ENCODE measurements at regions of chr14 and their contacts with region 1.

Region 1: GRCh38 chr14:77862154-77862786 is 62.4 kb downstream of the ADCK1 start:
- DNase-seq: no peak
- H3K4me3 ChIP-seq: no peak overlapping the region
- H3K27ac ChIP-seq: no peak overlapping the region
- H3K4me1 ChIP-seq: no peaks in the 10 kb centered on the region
- H3K27me3 ChIP-seq: no peaks in the 10 kb centered on the region
- CTCF ChIP-seq: peak; percentile 79 to 96 (median 91)
- EP300 ChIP-seq: no peak
- POLR2A ChIP-seq: no peak

Region 2: DNA sequence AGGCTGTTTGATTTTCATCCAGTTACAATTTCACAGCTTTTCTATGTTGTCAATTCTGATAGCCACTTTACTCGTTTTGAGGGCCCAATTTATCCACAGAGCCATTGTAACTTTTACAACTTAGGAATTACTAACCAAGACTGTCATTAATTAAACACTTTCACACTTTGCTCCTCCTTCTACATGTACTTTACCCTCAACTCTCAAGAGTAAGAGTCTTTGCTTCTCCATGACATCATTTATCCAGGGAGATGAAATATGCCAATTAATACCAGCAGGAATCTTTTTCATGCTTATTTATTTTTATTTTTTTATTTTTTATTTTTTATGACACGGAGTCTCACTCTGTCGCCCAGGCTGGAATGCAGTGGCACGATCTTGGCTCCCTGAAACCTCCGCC is 140.8 kb before region 1 on chr14:
- intact Hi-C with region 1: no loop called
- DNase-seq: no peak
- H3K4me3 ChIP-seq: no peak overlapping the region
- H3K27ac ChIP-seq: no peak overlapping the region
- H3K4me1 ChIP-seq: no peaks in the 10 kb centered on the region
- H3K27me3 ChIP-seq: no peaks in the 10 kb centered on the region
- CTCF ChIP-seq: no peak
- EP300 ChIP-seq: no peak
- POLR2A ChIP-seq: no peak

Region 3: DNA sequence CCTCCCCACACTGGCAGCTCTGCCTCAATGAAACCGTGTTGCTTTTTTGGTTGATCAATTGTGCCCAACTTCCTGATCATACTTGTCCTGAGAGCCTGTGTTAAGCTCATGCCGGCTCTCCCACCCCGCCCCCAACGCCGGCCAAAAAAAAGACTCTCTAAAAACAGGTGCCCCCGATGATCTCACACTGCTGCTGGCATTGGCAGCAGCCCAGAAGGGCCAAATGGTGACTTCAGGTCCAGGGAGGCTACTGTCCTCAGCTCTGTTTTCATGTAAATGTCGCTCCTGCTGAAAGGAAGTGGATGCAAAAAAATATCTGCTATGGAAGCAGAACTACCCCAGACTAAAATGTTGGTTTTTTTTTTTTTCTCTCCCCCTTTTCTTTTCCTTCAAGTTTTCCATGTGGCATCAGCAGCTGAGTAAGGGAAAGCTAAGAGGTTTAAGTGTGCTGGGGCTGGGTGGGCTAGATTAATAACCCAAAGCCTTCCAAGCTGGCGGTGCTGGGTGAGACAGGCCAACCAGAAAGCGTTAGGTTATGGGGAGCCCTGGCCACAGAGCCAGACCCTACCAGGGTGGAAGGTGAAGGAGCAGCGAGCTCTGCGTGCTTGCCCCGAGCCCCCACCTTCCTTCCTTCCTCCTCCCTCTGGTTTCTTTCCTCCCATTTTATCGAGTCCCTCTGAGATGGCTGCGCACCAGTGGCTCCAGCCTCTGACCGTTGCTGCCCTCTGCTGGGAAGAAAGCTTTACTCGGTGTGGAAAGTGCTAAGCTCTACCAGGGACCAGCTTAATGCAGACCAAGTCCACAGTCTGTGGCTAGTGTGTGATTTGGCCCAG is 704.0 kb after region 1 on chr14:
- intact Hi-C with region 1: loop called (anchors 5 kb)
- DNase-seq: no peak
- H3K4me3 ChIP-seq: peak overlapping the region; percentile 19 to 48 (median 38)
- H3K27ac ChIP-seq: no peak overlapping the region
- H3K4me1 ChIP-seq: peaks cover 0 to 8% (median 6%) of the 10 kb centered on the region in 4 donors
- H3K27me3 ChIP-seq: no peaks in the 10 kb centered on the region
- CTCF ChIP-seq: peak; percentile 39 to 69 (median 54)
- EP300 ChIP-seq: no peak
- POLR2A ChIP-seq: no peak